PC-3 (cell line): ENCODE measurements at regions of chr20 and their contacts with region 1.

Region 1: DNA sequence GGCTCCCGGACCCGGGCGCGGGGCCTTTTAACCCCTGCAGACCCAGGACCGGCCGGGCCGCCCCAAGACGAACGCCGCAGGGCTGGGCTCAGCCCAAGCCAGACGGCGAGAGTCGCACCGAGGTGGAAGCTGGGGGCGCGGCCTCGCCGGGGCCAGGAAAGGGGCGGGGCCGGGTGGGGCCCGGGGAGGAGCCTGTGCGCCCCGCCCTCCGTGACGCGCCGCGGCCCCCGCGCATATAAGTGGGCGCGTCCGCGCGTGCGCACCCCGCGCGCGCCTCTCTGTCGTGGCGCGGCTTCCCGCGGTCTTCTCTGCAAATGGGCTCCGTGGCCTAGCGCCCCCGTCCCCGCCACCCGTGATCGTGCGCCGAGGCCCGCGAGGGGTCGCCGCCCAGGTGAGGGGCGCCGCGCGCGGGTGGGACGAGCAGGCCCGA is at the start of gene PPDPF:
- DNase-seq: peak; percentile 84
- ATAC-seq: peak; percentile 70
- H3K4me3 ChIP-seq: peak within 1 kb of the TSS; percentile 99
- H3K27ac ChIP-seq: peak within 1 kb of the TSS; percentile 75
- H3K4me1 ChIP-seq: peaks cover 13% of the 10 kb centered on the region
- H3K27me3 ChIP-seq: no peaks in the 10 kb centered on the region
- CTCF ChIP-seq: no peak
- total RNA-seq, gene PPDPF: 245 and 256 TPM in 2 replicates

Region 2: DNA sequence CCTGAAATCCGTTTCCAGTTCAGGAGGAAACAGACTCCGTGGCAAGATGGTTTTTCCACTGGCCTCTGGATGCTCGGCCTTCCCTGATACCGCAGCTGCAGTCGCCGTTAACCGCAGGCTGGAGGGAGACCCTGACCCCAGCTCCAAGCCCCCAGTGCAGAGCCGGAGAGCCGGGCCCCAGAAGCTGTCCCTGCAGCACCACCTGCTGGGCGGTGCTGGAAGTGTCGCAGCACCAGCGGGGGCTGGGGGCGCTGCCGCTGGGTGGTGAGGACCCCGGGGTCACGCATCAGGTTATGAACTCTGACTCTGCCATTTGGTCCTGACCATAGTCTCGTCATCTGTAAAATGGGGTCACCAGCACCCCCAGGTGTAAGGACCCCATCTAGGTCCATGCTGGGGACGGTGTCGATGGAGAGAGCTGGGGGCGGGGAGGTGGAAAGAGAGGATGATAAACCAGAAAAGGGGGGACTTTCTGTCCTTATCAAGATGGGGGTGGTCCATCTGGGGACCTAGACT is 138.7 kb before region 1 on chr20:
- CTCF ChIA-PET with region 1: no interaction called
- POLR2A ChIA-PET with region 1: interaction called, 12 read pairs
- intact Hi-C with region 1: no loop called
- DNase-seq: peak; percentile 25
- ATAC-seq: peak; percentile 45; the same call in 1 of the 2 replicates
- H3K4me3 ChIP-seq: no peak overlapping the region
- H3K27ac ChIP-seq: no peak overlapping the region
- H3K4me1 ChIP-seq: no peaks in the 10 kb centered on the region
- H3K27me3 ChIP-seq: peaks cover 38% of the 10 kb centered on the region
- CTCF ChIP-seq: peak; percentile 99

Region 3: DNA sequence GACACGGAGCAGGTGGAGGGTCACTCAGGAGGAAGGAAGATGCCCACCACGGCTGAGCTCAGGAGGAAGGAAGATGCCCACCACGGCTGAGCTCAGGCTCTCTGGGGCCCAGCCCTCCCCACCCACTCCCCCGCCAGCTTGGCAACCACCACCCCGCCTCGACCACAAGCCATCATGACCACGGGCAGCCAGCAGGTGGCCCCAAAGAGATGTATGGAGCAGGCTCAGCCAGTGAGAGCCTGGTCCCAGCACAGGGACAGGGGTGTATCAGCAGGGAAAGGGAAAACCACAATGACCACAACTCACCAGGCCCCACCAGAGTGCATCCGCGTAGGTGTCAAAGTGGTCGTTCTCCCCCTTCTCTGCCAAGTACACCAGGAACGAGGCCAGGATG is 78.4 kb before region 1 on chr20:
- CTCF ChIA-PET with region 1: no interaction called
- POLR2A ChIA-PET with region 1: interaction called, 12 read pairs
- intact Hi-C with region 1: loop called (anchors 1 kb)
- DNase-seq: peak; percentile 73
- ATAC-seq: peak; percentile 95
- H3K4me3 ChIP-seq: no peak overlapping the region
- H3K27ac ChIP-seq: no peak overlapping the region
- H3K4me1 ChIP-seq: no peaks in the 10 kb centered on the region
- H3K27me3 ChIP-seq: no peaks in the 10 kb centered on the region
- CTCF ChIP-seq: peak; percentile 64

Region 4: GRCh38 chr20:63574156-63574828 is 53.8 kb after region 1 on chr20 and contains the start of gene HELZ2:
- CTCF ChIA-PET with region 1: no interaction called
- POLR2A ChIA-PET with region 1: interaction called, 11 read pairs
- intact Hi-C with region 1: no loop called
- DNase-seq: peak; percentile 58
- ATAC-seq: peak; percentile 85
- H3K4me3 ChIP-seq: peak within 1 kb of the TSS; percentile 77
- H3K27ac ChIP-seq: no peak within 1 kb of the TSS
- H3K4me1 ChIP-seq: peaks cover 18% of the 10 kb centered on the region
- H3K27me3 ChIP-seq: no peaks in the 10 kb centered on the region
- CTCF ChIP-seq: no peak
- total RNA-seq, gene HELZ2: 33.4 and 77.2 TPM in 2 replicates

Region 5: DNA sequence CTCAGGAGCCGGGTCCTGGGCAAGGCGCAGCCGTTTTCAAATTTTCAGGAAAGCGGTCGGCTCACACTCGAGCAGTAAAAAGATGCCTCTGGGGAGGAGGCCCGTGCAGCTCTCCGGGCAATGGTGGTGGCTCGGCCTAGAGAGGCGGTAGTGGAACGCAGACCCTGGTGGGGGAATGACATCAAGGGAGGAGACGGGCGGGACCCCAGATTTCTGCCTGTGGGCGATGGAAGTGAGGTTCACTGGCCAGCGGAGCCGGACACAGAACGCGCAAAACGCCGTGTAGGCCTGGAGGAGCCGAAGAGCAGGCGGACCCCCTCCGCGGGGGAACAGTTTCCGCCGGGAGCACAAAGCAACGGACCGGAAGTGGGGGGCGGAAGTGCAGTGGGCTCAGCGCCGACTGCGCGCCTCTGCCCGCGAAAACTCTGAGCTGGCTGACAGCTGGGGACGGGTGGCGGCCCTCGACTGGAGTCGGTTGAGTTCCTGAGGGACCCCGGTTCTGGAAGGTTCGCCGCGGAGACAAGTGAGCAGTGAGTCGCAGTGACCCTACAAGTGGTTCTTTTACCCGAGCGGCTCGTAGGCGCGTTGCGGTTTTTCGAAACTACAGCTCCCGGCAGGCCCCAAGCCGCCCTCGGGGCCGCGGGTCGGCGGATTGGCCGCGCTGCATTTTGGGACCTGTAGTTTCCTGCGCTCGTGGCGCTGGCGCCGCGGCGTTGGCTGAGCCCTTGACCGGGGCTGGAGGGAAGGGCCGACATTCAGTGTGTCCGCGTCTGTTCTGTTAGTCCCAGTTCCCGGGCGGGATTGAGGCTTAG is 137.6 kb after region 1 on chr20 and contains the start of gene RTEL1:
- CTCF ChIA-PET with region 1: no interaction called
- POLR2A ChIA-PET with region 1: interaction called, 11 read pairs
- intact Hi-C with region 1: no loop called
- DNase-seq: peak; percentile 93
- ATAC-seq: peak; percentile 97
- H3K4me3 ChIP-seq: peak within 1 kb of the TSS; percentile 91
- H3K27ac ChIP-seq: peak within 1 kb of the TSS; percentile 41
- H3K4me1 ChIP-seq: peaks cover 9% of the 10 kb centered on the region; the same call in 1 of the 2 replicates
- H3K27me3 ChIP-seq: no peaks in the 10 kb centered on the region
- CTCF ChIP-seq: no peak
- total RNA-seq, gene RTEL1: 43.0 and 56.2 TPM in 2 replicates

Region 6: DNA sequence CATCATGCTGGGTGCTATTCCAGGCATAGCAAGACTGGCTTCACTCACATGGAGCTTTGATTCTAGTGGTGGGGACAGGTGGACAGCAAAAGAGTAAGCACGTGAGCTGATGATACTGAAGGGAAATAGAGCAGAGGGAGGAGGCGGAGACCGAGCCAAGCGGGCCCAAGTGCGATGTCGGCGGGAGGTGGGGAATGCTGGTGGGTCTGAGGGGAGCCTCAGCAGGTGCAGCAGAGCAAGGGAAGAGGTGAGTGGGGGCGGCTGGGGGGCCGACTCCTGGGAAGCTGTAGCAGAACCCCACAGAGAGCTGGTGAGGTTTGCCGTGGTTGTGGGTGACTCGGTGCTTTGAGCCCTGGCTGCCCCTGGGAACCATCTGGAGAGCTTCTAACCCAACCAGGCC is 147.8 kb after region 1 on chr20:
- CTCF ChIA-PET with region 1: no interaction called
- POLR2A ChIA-PET with region 1: no interaction called
- intact Hi-C with region 1: no loop called
- DNase-seq: no peak
- ATAC-seq: no peak
- H3K4me3 ChIP-seq: no peak overlapping the region
- H3K27ac ChIP-seq: no peak overlapping the region
- H3K4me1 ChIP-seq: no peaks in the 10 kb centered on the region
- H3K27me3 ChIP-seq: no peaks in the 10 kb centered on the region
- CTCF ChIP-seq: no peak